ENCODE measurements at regions of chr3 and their contacts with region 1.

Region 1: DNA sequence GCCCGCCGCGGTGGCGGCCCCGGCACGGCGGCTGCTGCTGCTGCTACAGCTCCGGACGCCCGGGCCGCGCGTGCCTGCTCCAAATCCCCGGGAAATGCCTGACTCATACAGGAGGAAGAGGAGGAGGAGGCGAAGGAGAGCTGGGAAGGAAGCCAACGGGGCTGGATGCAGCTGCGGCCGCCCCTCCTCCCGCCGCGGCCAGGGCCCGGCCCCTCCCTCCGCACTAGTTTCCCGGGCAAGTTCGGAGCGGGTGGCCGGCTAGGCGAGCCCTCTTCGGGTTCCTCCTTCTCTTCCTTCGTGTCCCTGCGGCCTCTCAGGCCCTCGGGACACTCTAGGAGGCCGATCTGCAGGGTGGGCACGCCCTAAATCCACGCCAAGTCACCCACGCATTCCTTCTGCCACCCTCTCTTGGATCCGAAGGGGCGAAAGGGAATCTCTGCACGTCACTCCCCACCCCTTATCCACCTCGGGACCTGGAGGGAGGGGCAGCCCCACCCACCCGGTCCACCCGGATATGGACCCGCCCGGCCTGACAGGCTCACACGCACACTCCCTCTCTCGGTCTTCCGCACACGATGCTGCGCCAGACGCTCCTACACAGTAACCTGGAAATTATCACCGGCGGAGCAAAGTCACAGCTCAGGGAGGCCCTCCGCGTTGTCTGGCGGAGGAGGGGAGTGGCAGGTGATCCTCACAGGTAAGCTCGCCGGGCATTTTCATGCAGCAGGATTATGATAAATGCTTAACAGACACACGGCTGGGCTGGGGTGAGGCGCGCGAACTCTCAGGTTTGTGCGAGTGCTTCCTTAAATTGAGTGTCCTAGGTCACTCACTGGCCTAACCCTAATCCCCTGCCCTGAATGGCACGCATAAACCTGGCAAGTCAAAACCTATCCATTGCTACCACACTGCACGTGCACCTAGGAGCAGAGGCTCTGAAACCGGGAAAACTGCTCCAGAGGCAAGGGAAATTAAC is at the starts of genes OSBPL10 and ZNF860:
- DNase-seq: peak; percentile 94
- H3K4me3 ChIP-seq: peak within 1 kb of the TSS; percentile 49 to 89 (median 75)
- H3K27ac ChIP-seq: peak within 1 kb of the TSS; percentile 88
- H3K4me1 ChIP-seq: peaks cover 26% of the 10 kb centered on the region
- H3K27me3 ChIP-seq: no peaks in the 10 kb centered on the region
- CTCF ChIP-seq: peak in 1 of 2 donors; percentile 26
- total RNA-seq, gene OSBPL10: 68.1 to 68.7 TPM
- total RNA-seq, gene ZNF860: 3.4 to 4.0 TPM

Region 2: GRCh38 chr3:31777092-31777491 is 204.4 kb before region 1 on chr3:
- CTCF ChIA-PET with region 1: no interaction called
- dilution Hi-C with region 1: no loop called
- in situ Hi-C with region 1: no loop called
- intact Hi-C with region 1: loop called (anchors 10 kb)
- DNase-seq: peak; percentile 41
- H3K4me3 ChIP-seq: no peak overlapping the region
- H3K27ac ChIP-seq: peak overlapping the region; percentile 23
- H3K4me1 ChIP-seq: peaks cover 23% of the 10 kb centered on the region
- H3K27me3 ChIP-seq: no peaks in the 10 kb centered on the region
- CTCF ChIP-seq: no peak

Region 3: DNA sequence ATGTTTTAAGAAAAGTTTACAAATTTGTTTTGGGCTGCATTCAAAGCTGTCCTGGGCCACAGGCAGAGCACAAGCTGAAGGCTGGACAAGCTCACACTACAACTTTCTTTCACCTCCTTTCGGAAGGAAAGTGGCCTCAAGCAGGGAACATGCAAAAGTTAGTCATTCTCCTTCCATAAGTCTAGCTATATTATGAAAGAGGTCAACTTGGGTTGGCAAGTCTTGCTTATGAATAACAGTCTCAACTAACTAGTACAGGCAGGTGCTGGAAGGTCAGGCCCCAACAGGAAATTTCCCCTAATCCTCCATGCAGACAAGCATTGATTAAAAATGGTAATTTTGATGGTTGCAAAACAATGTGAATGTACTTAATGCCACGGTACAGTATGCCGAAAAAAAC is 69.9 kb before region 1 on chr3:
- CTCF ChIA-PET with region 1: no interaction called
- dilution Hi-C with region 1: loop called (anchors 5 kb)
- in situ Hi-C with region 1: no loop called
- intact Hi-C with region 1: loop called (anchors 1 kb)
- DNase-seq: peak; percentile 92
- H3K4me3 ChIP-seq: no peak overlapping the region
- H3K27ac ChIP-seq: peak overlapping the region; percentile 62
- H3K4me1 ChIP-seq: peaks cover 28% of the 10 kb centered on the region
- H3K27me3 ChIP-seq: no peaks in the 10 kb centered on the region
- CTCF ChIP-seq: no peak

Region 4: DNA sequence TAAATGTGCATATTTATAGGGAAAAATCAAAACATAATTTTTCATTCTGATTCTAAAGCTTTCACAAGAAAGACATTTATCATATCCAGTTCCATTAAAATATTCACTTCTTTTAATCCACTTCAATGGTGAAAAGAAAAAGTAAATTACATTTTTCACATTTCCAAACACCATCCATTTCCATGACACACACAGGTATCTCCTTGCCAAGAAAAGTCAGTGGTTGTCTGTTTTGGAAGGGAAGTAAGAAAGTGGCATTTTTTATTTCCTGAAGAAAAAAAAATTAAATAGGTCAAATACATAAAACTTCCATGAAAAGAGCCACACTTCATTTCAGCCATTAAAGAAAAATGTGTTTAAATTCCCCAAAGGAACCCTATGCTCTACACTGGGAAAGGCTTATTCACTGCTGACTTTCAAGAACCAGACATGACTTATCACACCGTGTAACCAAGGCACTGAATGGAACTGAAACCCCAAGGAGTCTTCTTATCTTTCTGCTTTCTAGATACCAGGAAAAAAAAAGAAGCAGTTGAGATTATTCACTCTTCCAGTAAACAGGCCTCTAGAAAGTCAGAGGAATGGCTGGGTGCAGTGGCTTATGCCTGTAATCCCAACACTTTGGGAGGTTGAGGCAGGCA is 45.0 kb before region 1 on chr3:
- CTCF ChIA-PET with region 1: no interaction called
- dilution Hi-C with region 1: loop called (anchors 5 kb)
- in situ Hi-C with region 1: no loop called
- intact Hi-C with region 1: loop called (anchors 5 kb)
- DNase-seq: no peak
- H3K4me3 ChIP-seq: no peak overlapping the region
- H3K27ac ChIP-seq: peak overlapping the region; percentile 0
- H3K4me1 ChIP-seq: peaks cover 47% of the 10 kb centered on the region
- H3K27me3 ChIP-seq: no peaks in the 10 kb centered on the region
- CTCF ChIP-seq: no peak

Region 5: GRCh38 chr3:32018757-32019564 is 37.5 kb after region 1 on chr3:
- CTCF ChIA-PET with region 1: no interaction called
- dilution Hi-C with region 1: no loop called
- in situ Hi-C with region 1: no loop called
- intact Hi-C with region 1: no loop called
- DNase-seq: peak; percentile 31
- H3K4me3 ChIP-seq: no peak overlapping the region
- H3K27ac ChIP-seq: no peak overlapping the region
- H3K4me1 ChIP-seq: no peaks in the 10 kb centered on the region
- H3K27me3 ChIP-seq: no peaks in the 10 kb centered on the region
- CTCF ChIP-seq: peak; percentile 68 to 70

Measured in mammary epithelial cell (primary cell).